ENCODE measurements at regions of chr10 and their contacts with region 1.

Region 1: GRCh38 chr10:132939957-132940790 is 2.2 kb downstream of the CFAP46 start:
- DNase-seq: peak; percentile 62 to 76 (median 72)
- ATAC-seq: peak; percentile 93
- H3K4me3 ChIP-seq: no peak overlapping the region
- H3K27ac ChIP-seq: no peak overlapping the region
- H3K4me1 ChIP-seq: peaks cover 0 to 7% of the 10 kb centered on the region in 2 experiments; a peak in 1 of 5 replicates
- H3K27me3 ChIP-seq: peaks cover 4 to 44% of the 10 kb centered on the region in 2 experiments; a peak in 3 of 5 replicates
- CTCF ChIP-seq: peak; percentile 77 to 84 (median 80)
- EP300 ChIP-seq: no peak
- POLR2A ChIP-seq: no peak
- RAD21 ChIP-seq: peak; percentile 66 to 74

Region 2: GRCh38 chr10:132817701-132818211 is 122.4 kb before region 1 on chr10:
- CTCF ChIA-PET with region 1: no interaction called
- POLR2A ChIA-PET with region 1: no interaction called
- in situ Hi-C with region 1: no loop called
- intact Hi-C with region 1: no loop called
- DNase-seq: no peak
- ATAC-seq: no peak
- H3K4me3 ChIP-seq: no peak overlapping the region
- H3K27ac ChIP-seq: no peak overlapping the region
- H3K4me1 ChIP-seq: peaks cover 0 to 7% of the 10 kb centered on the region in 2 experiments; a peak in 1 of 5 replicates
- H3K27me3 ChIP-seq: peaks cover 13 to 28% of the 10 kb centered on the region in 2 experiments; a peak in 3 of 5 replicates
- CTCF ChIP-seq: no peak
- EP300 ChIP-seq: no peak
- POLR2A ChIP-seq: no peak
- RAD21 ChIP-seq: no peak

Region 3: GRCh38 chr10:133124357-133125211 is 184.4 kb after region 1 on chr10:
- CTCF ChIA-PET with region 1: interaction called, 24 read pairs
- POLR2A ChIA-PET with region 1: no interaction called
- in situ Hi-C with region 1: loop called (anchors 5 kb)
- intact Hi-C with region 1: loop called (anchors 1 kb)
- DNase-seq: peak; percentile 42 to 61 (median 49)
- ATAC-seq: peak; percentile 95
- H3K4me3 ChIP-seq: no peak overlapping the region
- H3K27ac ChIP-seq: no peak overlapping the region
- H3K4me1 ChIP-seq: peaks cover 0 to 25% of the 10 kb centered on the region in 2 experiments; a peak in 3 of 5 replicates
- H3K27me3 ChIP-seq: no peaks in the 10 kb centered on the region; a peak in 1 of 5 replicates
- CTCF ChIP-seq: peak; percentile 44 to 84 (median 66)
- EP300 ChIP-seq: no peak
- POLR2A ChIP-seq: no peak
- RAD21 ChIP-seq: peak; percentile 43 to 60; a peak in 3 of 4 replicates